GM12878 (cell line): ENCODE measurements at regions of chr2 and their contacts with region 1.

Region 1: GRCh38 chr2:197011799-197012641 is 85.5 kb upstream of the PGAP1 start:
- DNase-seq: no peak
- ATAC-seq: peak; percentile 87
- H3K4me3 ChIP-seq: no peak overlapping the region
- H3K27ac ChIP-seq: no peak overlapping the region
- H3K4me1 ChIP-seq: no peaks in the 10 kb centered on the region
- H3K27me3 ChIP-seq: no peaks in the 10 kb centered on the region
- CTCF ChIP-seq: peak; percentile 64 to 75 (median 75)
- EP300 ChIP-seq: no peak
- POLR2A ChIP-seq: no peak
- RAD21 ChIP-seq: peak; percentile 73

Region 2: DNA sequence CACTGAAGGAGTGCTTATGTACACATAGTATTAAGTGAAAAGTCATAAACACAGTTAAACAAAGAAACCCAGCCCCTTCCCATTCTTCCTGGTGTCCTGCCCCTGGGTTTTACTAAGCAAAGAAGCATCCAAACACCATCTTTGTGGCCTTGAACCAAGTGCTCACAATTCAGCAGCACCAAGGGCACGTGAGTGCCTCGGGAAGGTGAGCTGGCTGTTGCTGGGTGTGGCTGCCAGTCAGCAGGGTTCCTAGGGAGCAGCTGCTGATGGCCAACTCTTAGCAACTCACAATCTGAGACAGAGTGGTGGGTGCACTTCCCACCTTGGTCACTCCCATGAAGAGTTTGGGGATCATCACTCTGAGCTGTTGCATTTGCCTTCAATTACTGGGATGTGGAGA is 12.2 kb after region 1 on chr2:
- CTCF ChIA-PET with region 1: interaction called, 13 read pairs
- POLR2A ChIA-PET with region 1: no interaction called
- RAD21 ChIA-PET with region 1: no interaction called
- SMC1A ChIA-PET with region 1: interaction called, 4 read pairs
- in situ Hi-C with region 1: no loop called
- intact Hi-C with region 1: no loop called
- DNase-seq: no peak
- ATAC-seq: no peak
- H3K4me3 ChIP-seq: no peak overlapping the region
- H3K27ac ChIP-seq: no peak overlapping the region
- H3K4me1 ChIP-seq: no peaks in the 10 kb centered on the region
- H3K27me3 ChIP-seq: no peaks in the 10 kb centered on the region
- CTCF ChIP-seq: no peak
- EP300 ChIP-seq: no peak
- POLR2A ChIP-seq: no peak
- RAD21 ChIP-seq: no peak